AG04449 (cell line): ENCODE measurements at regions of chr3 and their contacts with region 1.

Region 1: GRCh38 chr3:9302425-9303181 is 53.2 kb upstream of the SRGAP3 start:
- DNase-seq: no peak
- H3K4me3 ChIP-seq: peak overlapping the region; percentile 38
- CTCF ChIP-seq: peak; percentile 86

Region 2: DNA sequence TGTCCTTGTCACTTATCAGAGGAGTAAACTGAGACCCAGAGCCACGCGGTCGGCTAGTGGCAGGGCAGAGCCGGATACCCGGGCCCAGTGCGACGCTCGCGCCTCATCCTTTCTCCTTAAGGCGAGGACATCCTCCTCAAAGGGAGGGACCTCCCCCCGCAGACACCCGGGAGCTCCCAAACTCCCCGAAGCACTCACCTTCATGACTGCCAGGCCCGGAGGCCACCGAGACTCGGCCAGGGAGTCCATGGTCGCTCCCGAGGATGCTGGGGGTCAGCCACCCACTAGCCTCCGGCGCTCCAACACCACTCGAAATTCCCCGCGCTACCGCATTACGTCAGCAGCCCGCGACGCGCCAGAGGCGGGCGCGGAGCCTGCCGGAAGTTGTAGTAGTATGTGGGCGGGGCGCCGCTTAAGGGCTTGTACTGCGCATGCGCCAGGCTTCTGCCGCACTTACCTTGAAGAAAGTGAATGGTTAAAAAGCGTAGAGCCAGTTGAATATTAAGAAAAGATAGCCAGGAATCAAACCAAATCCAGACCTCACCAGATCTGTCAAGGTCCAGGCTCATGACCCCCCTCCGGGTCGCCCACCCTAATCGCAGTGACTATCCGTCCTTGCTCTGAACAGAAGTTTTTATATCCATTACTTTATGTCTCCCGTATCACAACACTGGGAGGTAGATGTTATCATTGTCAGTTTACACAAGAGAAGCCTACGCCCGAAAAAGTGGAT is 339.3 kb before region 1 on chr3 and contains the start of gene RAD18:
- CTCF ChIA-PET with region 1: interaction called, 262 read pairs
- POLR2A ChIA-PET with region 1: no interaction called
- DNase-seq: peak; percentile 40
- H3K4me3 ChIP-seq: peak within 1 kb of the TSS; percentile 87
- CTCF ChIP-seq: no peak

Region 3: GRCh38 chr3:8982509-8982908 is 320.1 kb before region 1 on chr3:
- CTCF ChIA-PET with region 1: interaction called, 262 read pairs
- POLR2A ChIA-PET with region 1: no interaction called
- DNase-seq: no peak
- H3K4me3 ChIP-seq: no peak overlapping the region
- CTCF ChIP-seq: no peak

Region 4: DNA sequence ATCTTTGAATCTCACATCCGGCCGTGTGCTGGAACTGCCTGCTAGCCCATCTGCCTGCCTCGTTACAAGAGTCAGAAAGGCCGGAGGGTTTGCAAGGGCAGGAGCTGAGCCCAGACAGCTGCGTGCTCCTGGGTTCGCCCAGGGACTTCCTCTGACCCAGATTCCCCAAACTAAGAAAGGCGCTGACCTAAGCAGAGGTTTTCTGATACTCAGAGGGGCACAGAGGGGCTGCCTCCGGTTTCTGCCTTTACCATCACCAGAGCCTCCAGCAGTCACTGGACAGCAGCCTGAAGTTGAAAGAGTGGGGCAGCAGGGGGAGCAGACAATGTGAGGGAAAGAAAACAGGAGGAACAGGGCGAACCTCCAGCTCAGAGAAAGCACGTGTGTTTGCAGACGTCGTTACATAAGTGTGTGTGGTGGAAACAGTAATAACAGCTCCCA is 305.9 kb before region 1 on chr3:
- CTCF ChIA-PET with region 1: interaction called, 30 read pairs
- POLR2A ChIA-PET with region 1: no interaction called
- DNase-seq: no peak
- H3K4me3 ChIP-seq: no peak overlapping the region
- CTCF ChIP-seq: peak; percentile 34

Region 5: DNA sequence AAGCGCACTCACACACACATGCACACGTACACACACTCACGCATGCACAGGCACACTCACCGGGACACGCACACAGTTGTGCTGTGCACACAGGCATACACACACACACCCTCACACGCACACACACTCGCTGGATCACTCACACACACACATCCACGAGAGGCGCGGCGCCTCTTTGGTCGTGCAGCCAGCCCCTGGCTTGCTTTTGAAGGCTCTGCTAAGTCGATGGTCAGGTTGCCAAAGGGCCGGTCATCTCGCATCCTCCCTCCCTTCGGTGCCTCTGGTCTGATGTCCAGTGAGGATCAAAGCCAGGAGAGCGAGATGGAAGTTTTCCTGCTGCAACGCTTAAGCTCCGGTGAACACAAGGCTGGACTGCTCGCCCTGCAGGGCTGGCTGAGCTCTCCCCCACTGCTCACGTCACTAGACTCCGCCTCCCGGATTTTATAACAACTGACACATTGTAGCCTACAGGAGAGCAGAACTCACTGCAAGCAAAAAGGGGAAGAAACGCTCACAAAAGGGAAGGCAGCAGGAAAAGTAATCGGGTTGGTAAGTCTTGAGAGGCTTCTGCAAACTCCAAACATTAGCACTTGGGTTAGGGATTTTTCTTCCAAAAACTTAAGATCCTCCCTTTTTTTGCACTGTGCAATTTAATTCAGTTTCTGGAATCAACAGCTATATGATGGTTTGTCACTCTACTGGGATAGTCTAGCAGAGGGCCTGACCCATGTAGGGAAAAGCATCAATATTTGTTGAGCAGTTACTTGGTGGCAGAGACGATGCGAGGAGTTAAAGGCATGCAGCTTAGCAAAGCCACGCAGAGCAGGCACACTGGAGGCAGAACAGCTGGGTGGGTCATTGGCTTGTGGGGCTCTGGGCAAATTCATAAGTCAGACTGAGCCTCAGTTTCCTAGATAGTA is 53.1 kb before region 1 on chr3 and contains the start of gene SRGAP3:
- CTCF ChIA-PET with region 1: interaction called, 10 read pairs
- POLR2A ChIA-PET with region 1: no interaction called
- DNase-seq: peak; percentile 38
- H3K4me3 ChIP-seq: peak within 1 kb of the TSS; percentile 60
- CTCF ChIP-seq: peak; percentile 33

Region 6: GRCh38 chr3:9290566-9290965 is 12.0 kb before region 1 on chr3:
- CTCF ChIA-PET with region 1: interaction called, 18 read pairs
- POLR2A ChIA-PET with region 1: no interaction called
- DNase-seq: no peak
- H3K4me3 ChIP-seq: no peak overlapping the region
- CTCF ChIP-seq: no peak